ENCODE measurements at regions of chrX and their contacts with region 1.

Region 1: GRCh38 chrX:123884809-123885408 is 25.1 kb downstream of the XIAP start:
- DNase-seq: peak; percentile 69
- H3K4me3 ChIP-seq: no peak overlapping the region
- H3K27ac ChIP-seq: no peak overlapping the region
- H3K4me1 ChIP-seq: peaks cover 3% of the 10 kb centered on the region
- CTCF ChIP-seq: peak; percentile 79

Region 2: DNA sequence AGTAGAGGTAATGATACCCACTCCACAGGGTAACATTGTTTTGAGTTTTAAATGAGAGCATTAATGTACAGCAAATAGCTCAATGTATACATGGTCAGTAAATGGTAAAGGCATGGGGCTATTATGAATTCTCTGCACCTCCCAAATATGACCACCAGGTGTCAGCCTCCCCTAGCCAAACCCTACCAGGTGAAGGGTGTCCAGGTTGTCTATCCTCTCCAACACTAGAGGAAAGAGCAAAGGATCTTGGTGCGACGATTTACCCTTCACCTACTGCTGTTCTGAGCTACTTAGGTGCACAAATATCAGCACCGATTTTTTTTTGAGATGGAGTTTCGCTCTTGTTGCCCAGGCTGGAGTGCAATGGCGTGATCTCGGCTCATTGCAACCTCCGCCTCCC is 51.5 kb before region 1 on chrX:
- CTCF ChIA-PET with region 1: no interaction called
- POLR2A ChIA-PET with region 1: no interaction called
- intact Hi-C with region 1: loop called (anchors 5 kb)
- DNase-seq: peak; percentile 65
- H3K4me3 ChIP-seq: no peak overlapping the region
- H3K27ac ChIP-seq: no peak overlapping the region
- H3K4me1 ChIP-seq: peaks cover 9% of the 10 kb centered on the region
- CTCF ChIP-seq: peak; percentile 78

Region 3: GRCh38 chrX:123846598-123847455 is 38.1 kb before region 1 on chrX:
- CTCF ChIA-PET with region 1: interaction called, 10 read pairs
- POLR2A ChIA-PET with region 1: no interaction called
- intact Hi-C with region 1: no loop called
- DNase-seq: no peak
- H3K4me3 ChIP-seq: no peak overlapping the region
- H3K27ac ChIP-seq: no peak overlapping the region
- H3K4me1 ChIP-seq: no peaks in the 10 kb centered on the region
- CTCF ChIP-seq: no peak

Region 4: GRCh38 chrX:123906557-123907316 is 21.8 kb after region 1 on chrX:
- CTCF ChIA-PET with region 1: no interaction called
- POLR2A ChIA-PET with region 1: no interaction called
- intact Hi-C with region 1: no loop called
- DNase-seq: no peak
- H3K4me3 ChIP-seq: no peak overlapping the region
- H3K27ac ChIP-seq: no peak overlapping the region
- H3K4me1 ChIP-seq: no peaks in the 10 kb centered on the region
- CTCF ChIP-seq: no peak

Region 5: GRCh38 chrX:124103966-124104365 is 219.1 kb after region 1 on chrX:
- CTCF ChIA-PET with region 1: no interaction called
- POLR2A ChIA-PET with region 1: no interaction called
- intact Hi-C with region 1: no loop called
- DNase-seq: no peak
- H3K4me3 ChIP-seq: no peak overlapping the region
- H3K27ac ChIP-seq: no peak overlapping the region
- H3K4me1 ChIP-seq: no peaks in the 10 kb centered on the region
- CTCF ChIP-seq: no peak